H1 (cell line): ENCODE measurements at regions of chr17 and their contacts with region 1.

Region 1: GRCh38 chr17:59753522-59754467 is 46.3 kb downstream of the VMP1 start:
- DNase-seq: no peak
- H3K4me3 ChIP-seq: no peak overlapping the region
- H3K27ac ChIP-seq: no peak overlapping the region
- H3K4me1 ChIP-seq: peaks cover 0 to 2% (median 0%) of the 10 kb centered on the region in 4 experiments; a peak in 1 of 7 replicates
- H3K27me3 ChIP-seq: no peaks in the 10 kb centered on the region
- CTCF ChIP-seq: peak in 2 of 3 experiments; percentile 54 to 59; a peak in 2 of 4 replicates
- EP300 ChIP-seq: no peak
- POLR2A ChIP-seq: no peak
- RAD21 ChIP-seq: peak; percentile 88

Region 2: GRCh38 chr17:59829217-59830006 is 75.6 kb after region 1 on chr17:
- CTCF ChIA-PET with region 1: interaction called, 19 read pairs
- POLR2A ChIA-PET with region 1: no interaction called
- DNase-seq: no peak
- H3K4me3 ChIP-seq: no peak overlapping the region
- H3K27ac ChIP-seq: no peak overlapping the region
- H3K4me1 ChIP-seq: peaks cover 2 to 11% (median 10%) of the 10 kb centered on the region in 4 experiments; a peak in 5 of 7 replicates
- H3K27me3 ChIP-seq: no peaks in the 10 kb centered on the region
- CTCF ChIP-seq: no peak
- EP300 ChIP-seq: no peak
- POLR2A ChIP-seq: no peak
- RAD21 ChIP-seq: no peak

Region 3: DNA sequence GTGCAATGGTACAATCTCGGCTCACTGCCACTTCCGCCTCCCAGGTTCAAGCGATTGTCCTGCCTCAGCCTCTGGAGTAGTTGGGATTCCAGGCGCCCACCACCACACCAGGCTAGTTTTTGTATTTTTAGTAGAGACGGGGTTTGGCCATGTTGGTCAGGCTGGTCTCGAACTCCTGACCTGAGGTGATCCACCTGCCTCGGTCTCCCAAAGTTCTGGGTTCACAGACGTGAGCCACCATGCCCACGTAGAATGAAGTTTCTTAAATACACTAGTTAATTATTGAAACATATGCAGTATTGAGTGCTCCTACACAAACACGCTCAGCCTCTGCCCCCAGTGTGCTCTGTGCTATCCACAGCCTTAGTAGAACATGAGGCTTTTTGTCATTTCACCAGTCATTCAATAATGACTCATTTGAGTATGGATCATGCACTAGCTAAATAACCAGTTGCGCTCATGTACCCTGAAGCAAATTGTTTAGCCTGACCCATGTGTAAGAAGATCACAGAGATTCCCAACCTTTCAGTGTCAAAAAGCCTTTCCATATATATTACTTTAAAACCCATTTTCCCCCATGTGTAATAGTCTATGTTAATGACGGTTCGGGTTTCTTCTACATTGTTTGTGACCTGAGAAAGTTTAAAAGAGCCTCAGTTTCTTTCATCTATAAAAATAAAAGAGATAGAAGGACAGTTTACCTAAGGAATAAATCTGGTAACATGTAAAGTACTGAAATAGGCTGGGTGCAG is 89.3 kb after region 1 on chr17:
- CTCF ChIA-PET with region 1: interaction called, 32 read pairs
- POLR2A ChIA-PET with region 1: interaction called, 24 read pairs
- DNase-seq: no peak
- H3K4me3 ChIP-seq: no peak overlapping the region
- H3K27ac ChIP-seq: no peak overlapping the region
- H3K4me1 ChIP-seq: peaks cover 7 to 15% (median 10%) of the 10 kb centered on the region in 4 experiments; a peak in 6 of 7 replicates
- H3K27me3 ChIP-seq: no peaks in the 10 kb centered on the region
- CTCF ChIP-seq: no peak
- EP300 ChIP-seq: no peak
- POLR2A ChIP-seq: peak; percentile 43 to 84
- RAD21 ChIP-seq: no peak